ENCODE measurements at regions of chr7 and their contacts with region 1.

Region 1: DNA sequence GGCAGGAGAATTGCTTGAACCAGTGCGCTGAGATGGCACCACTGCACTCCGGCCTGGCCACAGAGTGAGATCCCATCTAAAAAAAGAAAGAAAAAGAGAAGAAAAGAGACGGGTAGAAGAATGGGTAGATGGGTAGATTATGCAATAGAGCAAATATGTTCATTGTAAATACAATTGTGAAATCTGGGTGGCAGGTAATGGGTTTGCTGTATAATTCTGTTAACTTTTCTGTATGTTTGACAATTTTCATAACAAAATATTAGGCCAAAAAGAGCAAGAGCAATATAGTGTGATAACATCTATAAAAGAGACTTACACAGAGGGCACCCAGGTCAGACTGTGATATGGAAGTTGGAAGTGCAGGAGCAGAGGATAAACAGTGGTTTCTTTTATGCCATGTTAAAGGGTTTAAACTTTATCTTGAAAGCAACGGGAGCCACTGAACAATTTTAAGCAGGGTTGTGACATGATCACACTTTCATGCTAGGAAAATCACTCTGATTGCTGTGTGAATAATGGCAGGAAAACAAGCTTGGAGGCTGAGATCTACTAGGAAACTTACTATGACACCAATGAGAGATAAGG is 6.7 kb upstream of the COL28A1 start:
- H3K4me3 Mint-ChIP-seq: no peak overlapping the region
- H3K27ac Mint-ChIP-seq: no peak overlapping the region
- H3K4me1 Mint-ChIP-seq: peaks cover 4% of the 10 kb centered on the region
- H3K27me3 Mint-ChIP-seq: no peaks in the 10 kb centered on the region

Region 2: GRCh38 chr7:7103343-7104313 is 438.7 kb before region 1 on chr7:
- intact Hi-C with region 1: loop called (anchors 5 kb)
- H3K4me3 Mint-ChIP-seq: no peak overlapping the region
- H3K27ac Mint-ChIP-seq: peak overlapping the region; percentile 50
- H3K4me1 Mint-ChIP-seq: peaks cover 17% of the 10 kb centered on the region
- H3K27me3 Mint-ChIP-seq: peaks cover 1% of the 10 kb centered on the region

Region 3: DNA sequence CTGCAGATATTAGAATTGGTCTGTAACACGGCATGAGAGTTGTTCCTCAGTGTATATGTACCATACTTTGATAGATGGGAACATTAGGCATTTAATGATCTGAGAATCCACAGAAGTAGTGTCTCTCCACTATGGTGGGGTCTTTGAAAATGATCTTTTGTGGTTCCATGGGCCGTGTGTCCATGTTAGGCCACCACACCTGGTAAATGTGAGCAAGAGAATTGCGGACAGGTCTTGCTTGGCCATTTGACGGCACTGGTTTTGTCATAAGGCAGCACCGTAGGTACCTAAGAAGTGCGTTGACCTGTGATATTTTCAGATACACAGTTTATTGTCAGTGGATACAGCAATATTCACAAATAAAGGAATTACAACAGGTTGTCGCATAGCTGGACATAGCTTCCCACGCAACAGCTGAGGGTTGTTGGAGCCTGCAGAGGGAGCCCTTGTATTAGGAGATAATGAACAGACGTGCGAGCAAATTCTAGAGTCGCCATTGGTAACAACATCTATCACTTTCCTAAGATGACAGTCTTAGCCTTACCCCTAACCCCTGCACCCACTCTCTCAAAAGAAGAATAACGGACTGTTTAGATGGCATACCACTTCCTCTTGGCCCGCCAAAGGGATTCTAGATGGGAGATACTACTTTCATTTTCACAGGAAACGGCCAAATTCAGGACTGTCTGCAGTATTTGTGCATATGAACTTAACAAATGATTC is 118.0 kb before region 1 on chr7:
- intact Hi-C with region 1: loop called (anchors 5 kb)
- H3K4me3 Mint-ChIP-seq: peak overlapping the region; percentile 46
- H3K27ac Mint-ChIP-seq: no peak overlapping the region
- H3K4me1 Mint-ChIP-seq: no peaks in the 10 kb centered on the region
- H3K27me3 Mint-ChIP-seq: no peaks in the 10 kb centered on the region

Region 4: GRCh38 chr7:8143151-8143874 is 601.0 kb after region 1 on chr7:
- intact Hi-C with region 1: no loop called
- H3K4me3 Mint-ChIP-seq: no peak overlapping the region
- H3K27ac Mint-ChIP-seq: no peak overlapping the region
- H3K4me1 Mint-ChIP-seq: peaks cover 5% of the 10 kb centered on the region
- H3K27me3 Mint-ChIP-seq: no peaks in the 10 kb centered on the region